ENCODE measurements at regions of chr3 and their contacts with region 1.

Region 1: GRCh38 chr3:156542715-156543555 is 12.0 kb downstream of the SSR3 start:
- DNase-seq: no peak
- CTCF ChIP-seq: no peak

Region 2: DNA sequence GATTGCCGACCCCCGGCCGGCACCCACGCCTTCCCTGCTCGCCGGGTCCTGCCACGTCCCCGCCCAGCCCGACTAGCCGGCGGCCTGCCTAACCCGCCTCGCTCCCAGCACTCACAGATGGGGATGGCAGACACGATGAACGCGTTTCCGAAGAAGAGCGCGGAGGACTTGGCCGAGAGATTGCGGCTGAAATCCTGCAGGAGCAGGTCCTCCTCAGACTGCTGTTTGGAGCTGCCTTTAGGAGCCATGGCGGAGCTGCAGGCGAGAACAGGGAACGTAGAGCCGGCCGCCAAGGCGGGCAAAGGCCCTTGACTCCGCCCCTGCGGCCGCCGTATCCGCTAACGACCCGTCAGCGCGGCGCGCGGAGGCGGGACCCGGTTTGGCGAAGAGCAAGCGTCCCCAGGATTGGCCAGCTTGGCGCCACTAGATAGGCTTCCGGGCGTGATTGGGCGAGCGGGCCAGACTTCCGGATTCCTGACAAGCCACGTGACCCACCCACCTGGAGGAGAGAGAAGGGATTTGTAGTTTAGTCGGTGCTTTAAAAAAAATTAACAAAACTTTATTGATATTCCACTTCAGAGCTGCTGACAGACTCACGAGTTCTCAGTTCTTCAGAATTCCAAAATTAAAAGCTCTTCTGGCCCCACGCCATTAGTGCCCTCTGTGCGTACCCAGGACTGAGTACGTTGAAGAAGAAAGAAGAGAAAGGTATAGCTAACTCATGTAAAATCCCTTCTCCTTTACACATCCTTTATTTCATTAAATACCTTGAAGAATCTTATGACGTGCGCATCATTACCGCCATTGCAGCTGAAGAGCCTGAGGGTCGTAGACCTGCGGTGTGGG is 12.1 kb after region 1 on chr3 and contains the start of gene SSR3:
- CTCF ChIA-PET with region 1: interaction called, 29 read pairs
- POLR2A ChIA-PET with region 1: interaction called, 3 read pairs
- DNase-seq: peak; percentile 95
- CTCF ChIP-seq: no peak

Measured in GM10248 (cell line).